ENCODE measurements at regions of chr1 and their contacts with region 1.

Region 1: DNA sequence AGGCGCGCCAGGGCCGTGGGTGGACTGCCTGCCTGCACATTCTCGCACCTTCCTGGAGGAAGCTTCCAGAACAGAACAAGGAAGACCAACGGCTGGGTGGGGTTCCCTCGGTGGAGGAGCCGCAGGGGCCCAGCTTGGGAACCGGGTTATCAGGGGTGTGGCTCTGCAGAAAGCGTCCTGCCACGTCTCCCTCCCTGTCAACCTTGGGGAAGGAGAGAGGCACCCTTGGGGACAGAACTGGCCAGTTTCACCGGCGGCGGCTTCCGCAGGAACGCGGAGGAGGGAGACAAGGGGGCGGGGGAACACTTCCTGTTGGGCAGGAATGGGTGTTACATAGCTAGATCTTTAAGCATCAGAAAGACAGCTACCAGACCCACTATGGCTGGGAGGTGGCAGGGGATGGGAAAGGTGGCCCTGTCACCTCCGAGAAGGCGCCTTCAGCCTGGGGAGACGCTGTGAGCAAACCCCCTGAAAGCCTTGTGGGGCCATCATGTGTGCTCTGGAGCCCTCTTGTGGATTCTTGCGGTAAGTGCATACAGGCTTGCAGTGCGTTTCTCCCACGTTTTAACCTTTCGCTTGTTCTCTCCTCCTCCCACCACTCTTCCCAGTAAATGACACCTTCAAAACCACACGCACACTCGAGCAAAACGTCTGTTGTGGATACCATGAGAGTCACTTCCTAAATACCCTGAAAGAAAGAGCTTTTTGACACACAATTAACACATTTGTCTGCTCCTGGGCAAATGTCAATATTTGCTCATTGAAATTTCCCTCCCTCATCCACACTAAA is 3.8 kb upstream of the PLEKHA6 start:
- DNase-seq: peak in 1 of 2 experiments; percentile 91
- H3K4me3 ChIP-seq: peak overlapping the region in 3 of 4 experiments; percentile 30 to 50 (median 45); a peak in 6 of 8 replicates
- H3K27ac ChIP-seq: no peak overlapping the region
- H3K4me1 ChIP-seq: peaks cover 8 to 9% (median 9%) of the 10 kb centered on the region in 4 experiments
- H3K27me3 ChIP-seq: peaks cover 0 to 9% (median 5%) of the 10 kb centered on the region in 4 experiments; a peak in 4 of 7 replicates
- CTCF ChIP-seq: peak; percentile 84 to 98 (median 93)
- EP300 ChIP-seq: no peak
- POLR2A ChIP-seq: no peak
- RAD21 ChIP-seq: peak; percentile 96 to 99

Region 2: GRCh38 chr1:203581841-203582240 is 781.7 kb before region 1 on chr1:
- CTCF ChIA-PET with region 1: no interaction called
- POLR2A ChIA-PET with region 1: no interaction called
- DNase-seq: no peak
- H3K4me3 ChIP-seq: no peak overlapping the region
- H3K27ac ChIP-seq: no peak overlapping the region
- H3K4me1 ChIP-seq: no peaks in the 10 kb centered on the region
- H3K27me3 ChIP-seq: no peaks in the 10 kb centered on the region
- CTCF ChIP-seq: no peak
- EP300 ChIP-seq: no peak
- POLR2A ChIP-seq: no peak
- RAD21 ChIP-seq: no peak

Region 3: GRCh38 chr1:204177133-204177532 is 186.4 kb before region 1 on chr1:
- CTCF ChIA-PET with region 1: interaction called, 29 read pairs
- POLR2A ChIA-PET with region 1: no interaction called
- DNase-seq: no peak
- H3K4me3 ChIP-seq: no peak overlapping the region
- H3K27ac ChIP-seq: no peak overlapping the region
- H3K4me1 ChIP-seq: no peaks in the 10 kb centered on the region
- H3K27me3 ChIP-seq: 0 out of 7 replicates have a peak, but pooled peaks cover 0 to 2% (median 0%) of the 10 kb centered on the region in 4 experiments
- CTCF ChIP-seq: no peak
- EP300 ChIP-seq: no peak
- POLR2A ChIP-seq: no peak
- RAD21 ChIP-seq: no peak

Region 4: GRCh38 chr1:204213668-204214662 is 149.6 kb before region 1 on chr1 and contains the start of gene GOLT1A:
- CTCF ChIA-PET with region 1: interaction called, 156 read pairs
- POLR2A ChIA-PET with region 1: interaction called, 3 read pairs
- DNase-seq: peak; percentile 66 to 98
- H3K4me3 ChIP-seq: peak within 1 kb of the TSS; percentile 47 to 69 (median 61)
- H3K27ac ChIP-seq: 0 out of 2 replicates have a peak within 1 kb of the TSS, but pooled peaks have one; percentile 11
- H3K4me1 ChIP-seq: peaks cover 0 to 3% (median 2%) of the 10 kb centered on the region in 4 experiments; a peak in 4 of 7 replicates
- H3K27me3 ChIP-seq: no peaks in the 10 kb centered on the region
- CTCF ChIP-seq: peak; percentile 57 to 87 (median 84)
- EP300 ChIP-seq: no peak
- POLR2A ChIP-seq: peak in 1 of 2 experiments; percentile 14; a peak in 1 of 3 replicates
- RAD21 ChIP-seq: peak; percentile 85 to 89
- total RNA-seq, gene GOLT1A: 6.9 and 7.5 TPM in 2 replicates

Region 5: GRCh38 chr1:204257954-204258752 is 105.4 kb before region 1 on chr1:
- CTCF ChIA-PET with region 1: interaction called, 318 read pairs
- POLR2A ChIA-PET with region 1: interaction called, 3 read pairs
- DNase-seq: peak; percentile 56 to 93
- H3K4me3 ChIP-seq: no peak overlapping the region
- H3K27ac ChIP-seq: no peak overlapping the region
- H3K4me1 ChIP-seq: peaks cover 14 to 28% (median 21%) of the 10 kb centered on the region in 4 experiments
- H3K27me3 ChIP-seq: no peaks in the 10 kb centered on the region
- CTCF ChIP-seq: peak; percentile 96 to 97 (median 97)
- EP300 ChIP-seq: no peak
- POLR2A ChIP-seq: no peak
- RAD21 ChIP-seq: peak; percentile 89 to 94

Region 6: GRCh38 chr1:204307334-204307883 is 56.1 kb before region 1 on chr1:
- CTCF ChIA-PET with region 1: interaction called, 168 read pairs
- POLR2A ChIA-PET with region 1: no interaction called
- DNase-seq: peak in 1 of 2 experiments; percentile 81
- H3K4me3 ChIP-seq: peak overlapping the region; percentile 19 to 48 (median 38); a peak in 6 of 8 replicates
- H3K27ac ChIP-seq: no peak overlapping the region
- H3K4me1 ChIP-seq: peaks cover 10 to 40% (median 20%) of the 10 kb centered on the region in 4 experiments
- H3K27me3 ChIP-seq: no peaks in the 10 kb centered on the region; a peak in 1 of 7 replicates
- CTCF ChIP-seq: peak in 1 of 3 experiments; percentile 19; a peak in 2 of 4 replicates
- EP300 ChIP-seq: no peak
- POLR2A ChIP-seq: no peak
- RAD21 ChIP-seq: peak; percentile 13 to 50; a peak in 2 of 4 replicates

Region 7: DNA sequence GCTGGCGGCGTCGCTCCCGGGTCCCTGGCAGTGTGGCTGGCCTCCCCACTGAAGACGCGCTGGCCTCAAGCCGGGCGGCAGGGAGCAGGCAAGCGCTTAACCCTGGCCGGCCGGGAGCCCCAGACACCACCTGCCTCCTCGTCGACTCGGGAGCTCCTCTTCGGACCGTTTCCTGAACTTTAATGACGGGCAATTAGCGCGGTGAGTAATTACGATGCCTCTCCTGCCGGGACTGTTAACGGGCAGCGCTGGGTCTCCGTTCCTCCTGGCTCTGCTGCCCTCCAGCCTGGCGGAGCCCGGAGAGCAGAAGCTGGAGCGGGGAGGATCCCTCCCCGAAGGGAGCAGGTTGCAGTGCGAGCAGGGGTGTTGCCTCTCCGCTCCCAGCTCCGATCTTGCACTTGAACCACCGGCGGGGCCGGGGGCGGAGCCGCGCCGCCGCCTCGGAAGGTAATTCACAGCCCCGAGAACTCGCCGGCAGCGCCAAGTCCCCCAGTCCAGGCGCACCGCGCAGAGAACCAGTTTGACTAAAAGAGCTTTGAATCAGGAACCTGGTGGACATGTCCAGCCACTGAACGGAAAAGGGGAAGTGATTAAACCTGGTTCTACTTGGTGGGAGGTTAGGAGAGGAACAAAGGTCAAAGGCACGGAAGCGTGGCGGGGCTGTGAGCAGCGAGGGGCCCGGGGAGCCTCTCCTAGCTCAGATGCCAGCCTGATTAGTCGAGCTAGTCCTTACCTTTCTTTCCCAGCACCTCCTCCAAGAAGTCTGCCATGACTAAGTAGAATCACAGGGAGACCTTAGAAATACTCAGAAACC is 14.5 kb after region 1 on chr1:
- CTCF ChIA-PET with region 1: interaction called, 107 read pairs
- POLR2A ChIA-PET with region 1: interaction called, 5 read pairs
- DNase-seq: peak in 1 of 2 experiments; percentile 92
- H3K4me3 ChIP-seq: peak overlapping the region; percentile 46 to 87 (median 67)
- H3K27ac ChIP-seq: no peak overlapping the region
- H3K4me1 ChIP-seq: peaks cover 0 to 4% (median 1%) of the 10 kb centered on the region in 4 experiments; a peak in 6 of 7 replicates
- H3K27me3 ChIP-seq: peaks cover 5 to 52% (median 27%) of the 10 kb centered on the region in 4 experiments
- CTCF ChIP-seq: no peak
- EP300 ChIP-seq: no peak
- POLR2A ChIP-seq: peak in 1 of 2 experiments; percentile 25; a peak in 1 of 3 replicates
- RAD21 ChIP-seq: no peak

Region 8: GRCh38 chr1:204487256-204487615 is 123.7 kb after region 1 on chr1:
- CTCF ChIA-PET with region 1: no interaction called
- POLR2A ChIA-PET with region 1: no interaction called
- DNase-seq: no peak
- H3K4me3 ChIP-seq: no peak overlapping the region
- H3K27ac ChIP-seq: no peak overlapping the region
- H3K4me1 ChIP-seq: peaks cover under 1 to 1% (median under 1%) of the 10 kb centered on the region in 4 experiments; a peak in 6 of 7 replicates
- H3K27me3 ChIP-seq: no peaks in the 10 kb centered on the region; a peak in 1 of 7 replicates
- CTCF ChIP-seq: no peak
- EP300 ChIP-seq: no peak
- POLR2A ChIP-seq: no peak
- RAD21 ChIP-seq: no peak

Measured in H1 (cell line).